GM10248 (cell line): ENCODE measurements at regions of chr1 and their contacts with region 1.

Region 1: GRCh38 chr1:50936321-50936720 is 23.7 kb downstream of the FAF1 start:
- DNase-seq: no peak
- CTCF ChIP-seq: no peak

Region 2: DNA sequence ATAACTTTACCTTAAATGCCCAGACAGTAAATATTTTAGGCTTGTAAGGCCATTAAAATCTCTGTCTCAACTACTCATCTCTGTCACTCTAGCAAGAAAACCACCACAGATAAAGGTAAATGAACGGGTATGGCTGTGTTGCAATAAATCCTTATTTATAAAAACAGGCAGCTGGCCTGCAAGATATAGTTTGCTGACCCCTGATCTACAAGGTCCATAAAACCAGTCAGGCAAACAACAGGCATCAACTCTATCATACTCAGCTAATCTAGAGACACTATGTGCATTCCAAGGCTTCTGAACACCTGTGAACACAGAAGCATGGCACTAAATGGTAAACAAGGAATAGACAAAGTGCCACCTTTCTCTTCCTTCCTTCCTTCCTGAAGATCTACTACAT is 14.1 kb after region 1 on chr1:
- CTCF ChIA-PET with region 1: interaction called, 13 read pairs
- POLR2A ChIA-PET with region 1: no interaction called
- DNase-seq: no peak
- CTCF ChIP-seq: no peak